Activated CD4-positive, alpha-beta T cell treated with anti-CD3 and anti-CD28 coated beads, Interleukin-2, amount 10 ng/mL, durations not matched to agents 7 days and 5 days (primary cell): ENCODE measurements at regions of chr13 and their contacts with region 1.

Region 1: DNA sequence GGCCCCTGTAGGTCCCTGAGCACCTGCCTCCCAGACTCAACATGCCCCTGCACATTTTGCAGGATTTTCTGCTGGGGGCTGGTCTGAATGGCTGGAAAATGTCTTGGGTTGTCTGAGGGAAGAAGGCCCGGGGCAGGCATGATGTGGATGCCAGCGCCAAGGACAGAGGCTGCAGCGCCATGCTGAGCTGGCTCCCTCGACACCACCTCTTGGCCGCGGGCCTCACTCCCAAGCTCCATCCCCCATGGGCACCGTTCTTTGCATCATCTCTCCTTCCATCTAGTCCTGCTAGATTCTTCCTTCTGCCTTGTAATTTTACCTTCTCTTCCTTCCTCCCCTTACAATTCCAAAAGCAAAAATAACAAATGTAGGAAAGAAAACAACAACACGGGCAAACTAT is 70.6 kb downstream of the ZIC5 start:
- DNase-seq: no peak
- H3K4me3 Mint-ChIP-seq: no peak overlapping the region
- H3K27ac Mint-ChIP-seq: no peak overlapping the region
- H3K4me1 Mint-ChIP-seq: peaks cover 5% of the 10 kb centered on the region
- H3K27me3 Mint-ChIP-seq: peaks cover 63% of the 10 kb centered on the region

Region 2: GRCh38 chr13:99911069-99911964 is 10.4 kb after region 1 on chr13:
- CTCF ChIA-PET with region 1: interaction called, 11 read pairs
- POLR2A ChIA-PET with region 1: no interaction called
- DNase-seq: no peak
- H3K4me3 Mint-ChIP-seq: no peak overlapping the region
- H3K27ac Mint-ChIP-seq: peak overlapping the region; percentile 78
- H3K4me1 Mint-ChIP-seq: peaks cover 40% of the 10 kb centered on the region
- H3K27me3 Mint-ChIP-seq: peaks cover 21% of the 10 kb centered on the region

Region 3: GRCh38 chr13:99916366-99917103 is 15.6 kb after region 1 on chr13:
- CTCF ChIA-PET with region 1: interaction called, 11 read pairs
- POLR2A ChIA-PET with region 1: no interaction called
- DNase-seq: peak; percentile 33
- H3K4me3 Mint-ChIP-seq: no peak overlapping the region
- H3K27ac Mint-ChIP-seq: no peak overlapping the region
- H3K4me1 Mint-ChIP-seq: peaks cover 33% of the 10 kb centered on the region
- H3K27me3 Mint-ChIP-seq: peaks cover 12% of the 10 kb centered on the region

Region 4: DNA sequence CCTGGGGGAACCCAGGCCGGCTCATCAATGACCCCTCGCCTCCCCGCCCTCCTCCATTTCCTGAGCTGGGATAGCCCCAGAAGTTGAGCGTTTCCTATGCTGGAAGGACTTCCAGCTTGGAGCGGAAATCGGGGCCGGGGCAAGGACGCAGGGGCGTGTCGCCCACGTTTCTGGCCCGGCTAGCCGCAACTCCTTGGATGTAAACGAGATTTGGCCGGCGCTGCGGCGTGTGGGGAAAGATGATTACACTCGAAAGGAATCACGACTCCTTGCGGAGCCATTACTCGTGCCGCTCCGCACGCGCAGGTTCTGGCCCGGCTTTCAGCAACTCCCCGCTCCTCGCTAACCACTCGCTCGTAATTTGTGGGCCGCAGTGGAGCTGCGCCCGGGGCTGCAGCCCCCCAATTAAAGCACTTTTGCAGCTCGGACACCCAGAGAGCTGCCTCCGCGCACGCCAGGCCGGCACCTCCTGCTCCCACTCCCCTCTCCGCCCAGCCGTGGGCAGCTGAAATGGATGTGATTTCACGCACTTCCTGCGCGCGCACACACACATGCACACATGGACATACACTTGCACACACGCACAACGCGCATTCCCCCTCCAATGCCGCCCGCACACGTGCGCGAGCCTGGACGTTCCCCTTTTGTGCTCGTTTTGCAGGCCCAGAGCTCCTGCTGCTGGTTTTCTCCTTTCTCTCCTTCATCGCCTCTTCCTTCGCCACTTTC is 55.0 kb after region 1 on chr13:
- CTCF ChIA-PET with region 1: no interaction called
- POLR2A ChIA-PET with region 1: no interaction called
- DNase-seq: no peak
- H3K4me3 Mint-ChIP-seq: no peak overlapping the region
- H3K27ac Mint-ChIP-seq: peak overlapping the region; percentile 41
- H3K4me1 Mint-ChIP-seq: peaks cover 18% of the 10 kb centered on the region
- H3K27me3 Mint-ChIP-seq: peaks cover 88% of the 10 kb centered on the region